ENCODE measurements at regions of chr6 and their contacts with region 1.

Region 1: DNA sequence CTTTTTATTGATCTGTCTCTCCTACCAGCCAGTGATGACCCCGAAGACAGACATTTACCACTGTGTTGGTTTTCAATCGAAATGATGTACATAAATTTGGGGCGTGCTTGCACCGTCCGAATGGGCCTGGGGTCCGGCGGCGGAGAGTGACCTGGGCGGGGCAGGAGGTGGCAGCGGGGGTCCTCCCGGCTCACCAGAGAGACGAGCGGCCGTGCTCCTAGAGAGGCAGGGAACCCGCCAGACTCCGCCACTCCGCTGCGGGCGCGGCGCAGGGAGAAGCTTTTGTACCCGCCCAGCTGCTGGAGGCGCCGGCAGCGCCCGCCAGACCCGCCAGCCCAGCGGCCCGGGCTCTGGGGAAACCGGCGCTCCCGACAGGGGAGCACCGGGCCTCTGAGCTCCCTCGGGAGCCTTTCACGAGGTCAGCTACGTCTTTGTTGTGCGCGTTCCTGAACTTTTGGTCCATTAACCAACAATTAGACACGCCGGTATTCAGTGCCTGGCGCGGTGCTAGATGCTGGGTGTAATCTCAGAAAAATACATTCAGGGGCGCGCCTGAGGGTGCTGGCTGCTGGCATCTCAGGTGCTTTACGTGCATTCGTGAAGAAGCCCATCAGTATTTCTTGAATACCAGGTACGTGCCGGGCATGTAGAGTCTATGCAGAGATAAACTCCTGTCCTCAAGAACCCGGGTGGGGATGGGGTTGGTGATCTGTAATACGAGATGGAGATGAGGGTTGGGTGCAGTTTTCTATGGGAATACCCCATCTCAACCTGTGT is at the start of gene PGBD1:
- DNase-seq: peak; percentile 73 to 90 (median 88)
- ATAC-seq: peak; percentile 68 to 99 (median 96)
- H3K4me3 ChIP-seq: peak within 1 kb of the TSS; percentile 59 to 88 (median 74)
- H3K27ac ChIP-seq: peak within 1 kb of the TSS in 9 of 12 donors; percentile 29 to 76 (median 57)
- H3K4me1 ChIP-seq: peaks cover 0 to 18% (median 7%) of the 10 kb centered on the region in 12 donors
- H3K27me3 ChIP-seq: no peaks in the 10 kb centered on the region
- CTCF ChIP-seq: no peak
- POLR2A ChIP-seq: peak in 1 of 2 donors; percentile 47
- total RNA-seq, gene PGBD1: 2.5 to 3.8 (median 2.9) TPM

Region 2: DNA sequence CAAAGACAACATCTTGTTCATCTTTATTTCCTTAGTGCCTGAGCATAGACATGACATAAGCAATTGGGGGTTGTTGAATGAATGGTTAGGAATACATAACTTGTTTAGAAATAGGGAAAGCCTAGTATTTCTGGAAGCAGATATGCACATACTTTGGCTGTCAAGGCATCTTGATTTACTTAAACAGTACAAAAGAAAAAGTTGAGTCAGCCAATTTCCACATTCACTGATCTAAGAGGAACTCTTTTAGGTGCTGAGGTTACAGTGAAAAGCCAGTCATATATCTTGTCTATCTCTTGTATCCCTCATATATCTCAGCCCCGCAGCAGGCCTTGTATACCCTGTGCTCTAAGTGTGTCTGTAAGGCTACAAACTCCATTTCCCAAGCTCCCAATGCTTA is 41.0 kb before region 1 on chr6:
- intact Hi-C with region 1: no loop called
- DNase-seq: no peak
- ATAC-seq: no peak
- H3K4me3 ChIP-seq: no peak overlapping the region
- H3K27ac ChIP-seq: no peak overlapping the region
- H3K4me1 ChIP-seq: peaks cover 0 to 18% (median 0%) of the 10 kb centered on the region in 12 donors
- H3K27me3 ChIP-seq: no peaks in the 10 kb centered on the region
- CTCF ChIP-seq: no peak
- POLR2A ChIP-seq: no peak

Region 3: DNA sequence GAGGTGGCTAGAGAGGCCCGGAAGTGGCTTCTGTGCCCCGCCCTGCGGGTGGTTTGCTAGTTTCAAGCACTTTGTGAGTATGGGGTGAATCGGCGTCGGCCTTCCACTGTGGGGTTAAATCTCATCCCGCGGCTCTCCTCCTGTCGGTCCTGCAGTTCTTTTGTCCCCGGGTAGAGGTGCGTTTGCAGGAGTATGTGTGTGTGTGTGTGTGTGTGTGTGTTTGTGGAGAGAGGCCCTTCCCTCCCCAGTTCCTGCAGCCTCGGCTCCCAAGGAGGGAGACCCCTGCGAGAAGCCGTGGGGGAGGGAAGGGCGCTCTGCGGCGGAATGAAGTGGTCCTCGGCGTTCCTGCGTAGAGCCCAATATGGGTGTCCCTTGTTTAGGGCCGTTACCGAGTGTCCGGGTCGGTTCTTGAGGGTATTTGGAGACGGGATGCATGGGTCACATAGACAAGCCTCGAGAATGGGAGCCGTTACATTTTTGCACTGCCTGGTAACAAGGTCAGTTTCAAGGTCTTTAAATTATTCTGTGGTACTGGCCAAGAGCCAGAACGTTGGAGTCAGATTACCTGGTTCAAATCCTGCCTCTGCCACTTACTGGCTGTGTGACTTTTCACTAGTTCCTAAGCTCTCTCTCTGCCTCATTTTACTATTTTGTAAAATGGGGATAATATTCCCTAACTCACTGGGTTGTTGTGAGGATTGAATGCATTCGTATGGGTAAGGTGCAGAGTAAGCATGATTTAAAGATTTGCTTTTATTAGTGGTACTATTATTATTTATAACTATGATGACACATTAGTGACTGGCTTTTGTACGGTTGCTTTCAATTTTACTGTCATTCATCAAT is 68.6 kb after region 1 on chr6 and contains the start of gene ZKSCAN3:
- intact Hi-C with region 1: loop called in 2 of 10 experiments (anchors 5 kb)
- DNase-seq: peak; percentile 80 to 91 (median 88)
- ATAC-seq: peak; percentile 84 to 96 (median 96)
- H3K4me3 ChIP-seq: peak within 1 kb of the TSS; percentile 38 to 89 (median 71)
- H3K27ac ChIP-seq: peak within 1 kb of the TSS; percentile 12 to 84 (median 78)
- H3K4me1 ChIP-seq: peaks cover 0 to 42% (median 25%) of the 10 kb centered on the region in 12 donors
- H3K27me3 ChIP-seq: no peaks in the 10 kb centered on the region
- CTCF ChIP-seq: no peak
- POLR2A ChIP-seq: peak in 1 of 2 donors; percentile 28
- total RNA-seq, gene ZKSCAN3: 2.8 to 7.9 (median 5.6) TPM

Region 4: DNA sequence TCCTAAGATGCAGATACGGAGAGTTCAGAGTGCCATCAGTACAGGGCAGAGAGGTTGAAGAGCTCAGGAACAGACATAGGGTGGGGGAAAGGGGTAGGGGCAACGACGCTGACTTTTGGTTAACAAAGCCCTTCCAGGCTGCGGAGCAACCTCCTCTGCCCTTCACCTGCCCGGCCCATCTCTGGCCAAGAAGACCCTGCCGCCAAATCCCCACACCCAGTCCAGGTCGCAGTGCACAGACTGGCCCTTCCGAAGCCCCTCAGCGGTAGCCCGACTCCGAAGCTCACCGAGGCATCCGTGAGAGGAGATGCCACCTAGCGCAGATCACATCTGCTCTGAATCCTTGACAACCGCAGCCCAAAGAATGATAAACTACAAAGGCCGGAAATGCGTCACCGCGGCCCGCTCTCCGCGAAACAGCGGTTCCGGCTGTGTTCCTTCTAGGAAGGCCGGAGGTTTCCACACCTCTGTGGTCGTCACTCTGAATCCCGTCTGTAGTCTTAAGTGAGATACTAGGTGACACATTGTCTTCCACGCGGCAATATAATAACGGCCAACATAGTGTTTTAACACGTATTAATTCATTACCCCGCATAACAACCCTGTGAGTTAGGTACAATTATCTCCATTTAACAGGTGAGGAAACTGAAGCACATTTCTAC is 161.8 kb after region 1 on chr6 and contains the start of gene ZSCAN23:
- intact Hi-C with region 1: no loop called
- DNase-seq: peak; percentile 62 to 84 (median 80)
- ATAC-seq: peak; percentile 78 to 99 (median 97)
- H3K4me3 ChIP-seq: peak within 1 kb of the TSS; percentile 38 to 90 (median 74)
- H3K27ac ChIP-seq: peak within 1 kb of the TSS in 8 of 12 donors; percentile 35 to 78 (median 58)
- H3K4me1 ChIP-seq: peaks cover 0 to 13% (median 4%) of the 10 kb centered on the region in 12 donors
- H3K27me3 ChIP-seq: peaks cover 0 to 32% (median 25%) of the 10 kb centered on the region in 9 donors
- CTCF ChIP-seq: no peak
- POLR2A ChIP-seq: peak in 1 of 2 donors; percentile 25
- total RNA-seq, gene ZSCAN23: 0.48 to 2.1 (median 1.6) TPM